ENCODE measurements at regions of chrX and their contacts with region 1.

Region 1: GRCh38 chrX:136251041-136251991 is at the start of gene MAP7D3:
- DNase-seq: peak; percentile 51 to 71
- ATAC-seq: peak; percentile 88 to 96 (median 90)
- H3K4me3 ChIP-seq: peak within 1 kb of the TSS; percentile 60 to 83 (median 78)
- H3K27ac ChIP-seq: peak within 1 kb of the TSS in 9 of 10 donors; percentile 77 to 89 (median 81)
- H3K4me1 ChIP-seq: peaks cover 0 to 13% (median 5%) of the 10 kb centered on the region in 9 donors
- H3K27me3 ChIP-seq: peaks cover 0 to 28% (median 0%) of the 10 kb centered on the region in 7 donors
- CTCF ChIP-seq: no peak
- total RNA-seq, gene MAP7D3: 11.6 to 16.2 (median 14.5) TPM

Region 2: DNA sequence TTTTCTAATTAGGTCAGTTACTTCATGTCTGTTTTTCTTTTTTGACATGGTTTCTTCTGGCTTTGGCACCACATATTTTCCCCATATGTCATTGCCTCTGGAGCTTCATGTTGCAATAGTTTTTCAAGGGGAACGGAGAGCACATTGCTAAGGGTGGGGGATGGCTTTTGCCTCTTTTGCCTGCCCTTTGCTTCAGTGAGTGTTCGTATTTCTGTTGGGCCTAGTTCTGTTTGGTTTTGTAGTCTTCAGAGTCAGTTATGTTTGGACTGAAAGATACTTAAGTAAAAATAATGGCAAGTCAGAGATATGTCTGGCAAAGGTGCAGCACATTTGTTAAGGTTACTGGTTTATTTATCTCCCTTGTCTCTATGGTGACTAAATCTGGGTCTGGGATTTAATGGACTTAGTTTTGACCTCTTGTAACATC is 74.9 kb before region 1 on chrX:
- intact Hi-C with region 1: no loop called
- DNase-seq: no peak
- ATAC-seq: peak; percentile 67 to 96 (median 80)
- H3K4me3 ChIP-seq: no peak overlapping the region
- H3K27ac ChIP-seq: peak overlapping the region; percentile 33 to 86 (median 74)
- H3K4me1 ChIP-seq: peaks cover 0 to 83% (median 20%) of the 10 kb centered on the region in 9 donors
- H3K27me3 ChIP-seq: peaks cover 0 to 11% (median 0%) of the 10 kb centered on the region in 7 donors
- CTCF ChIP-seq: no peak

Region 3: GRCh38 chrX:136214551-136214950 is 36.8 kb before region 1 on chrX:
- intact Hi-C with region 1: loop called in 1 of 10 experiments (anchors 5 kb)
- DNase-seq: no peak
- ATAC-seq: peak in 1 of 8 donors; percentile 18
- H3K4me3 ChIP-seq: no peak overlapping the region
- H3K27ac ChIP-seq: peak overlapping the region in 1 of 10 donors; percentile 9
- H3K4me1 ChIP-seq: peaks cover 0 to 12% (median 0%) of the 10 kb centered on the region in 9 donors
- H3K27me3 ChIP-seq: peaks cover 0 to 15% (median 0%) of the 10 kb centered on the region in 7 donors
- CTCF ChIP-seq: no peak

Region 4: DNA sequence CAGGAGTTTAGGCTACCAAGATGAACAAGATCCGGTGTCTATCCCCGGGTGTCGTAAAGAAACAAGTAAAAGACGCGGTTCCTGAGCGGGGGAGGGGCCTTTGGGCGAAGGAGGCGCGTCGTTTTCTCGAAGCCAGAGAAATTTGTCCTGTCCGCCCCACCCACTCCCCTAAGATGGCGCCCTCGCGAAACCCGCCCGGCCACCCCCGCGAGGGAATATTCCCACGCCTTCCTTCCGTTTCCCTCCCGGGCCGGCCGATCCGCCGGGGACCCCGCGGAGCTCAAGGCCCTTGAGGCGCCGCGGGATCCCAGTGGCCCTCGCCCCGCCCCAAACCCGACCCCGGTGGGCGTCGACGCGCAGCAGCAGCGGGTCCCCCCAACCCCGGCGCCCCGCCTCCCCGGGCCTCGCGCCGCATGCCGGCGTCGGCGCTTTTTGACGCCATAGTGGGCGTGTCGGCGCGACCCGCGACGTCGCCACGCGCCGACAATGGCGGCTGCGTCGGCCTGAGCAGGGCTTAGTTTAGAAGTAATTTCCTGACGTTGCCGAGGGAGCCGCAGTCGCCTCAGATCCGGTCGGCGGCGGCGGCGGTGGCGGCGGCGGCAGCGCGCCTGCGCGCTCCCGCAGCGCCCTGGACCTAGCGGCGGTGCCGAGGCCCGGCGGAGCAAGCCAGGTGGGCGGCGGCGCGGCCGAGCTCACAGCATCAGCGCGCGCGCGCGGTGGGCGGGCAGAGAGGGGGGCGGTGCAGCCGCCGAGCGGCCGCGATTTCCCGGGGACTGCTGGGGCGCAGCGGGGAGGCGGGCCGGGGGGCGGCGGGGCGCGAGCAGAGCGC is 245.7 kb after region 1 on chrX and contains the start of gene HTATSF1:
- intact Hi-C with region 1: loop called in 1 of 10 experiments (anchors 10 kb)
- DNase-seq: peak; percentile 82 to 86
- ATAC-seq: peak; percentile 92 to 97 (median 94)
- H3K4me3 ChIP-seq: peak within 1 kb of the TSS; percentile 37 to 86 (median 74)
- H3K27ac ChIP-seq: peak within 1 kb of the TSS; percentile 86 to 98 (median 94)
- H3K4me1 ChIP-seq: peaks cover 0 to 22% (median 11%) of the 10 kb centered on the region in 9 donors
- H3K27me3 ChIP-seq: peaks cover 0 to 18% (median 0%) of the 10 kb centered on the region in 7 donors
- CTCF ChIP-seq: no peak
- total RNA-seq, gene HTATSF1: 55.0 to 77.8 (median 62.9) TPM

Measured in heart right ventricle (tissue), 16 donors.